ENCODE measurements at regions of chr6 and their contacts with region 1.

Region 1: DNA sequence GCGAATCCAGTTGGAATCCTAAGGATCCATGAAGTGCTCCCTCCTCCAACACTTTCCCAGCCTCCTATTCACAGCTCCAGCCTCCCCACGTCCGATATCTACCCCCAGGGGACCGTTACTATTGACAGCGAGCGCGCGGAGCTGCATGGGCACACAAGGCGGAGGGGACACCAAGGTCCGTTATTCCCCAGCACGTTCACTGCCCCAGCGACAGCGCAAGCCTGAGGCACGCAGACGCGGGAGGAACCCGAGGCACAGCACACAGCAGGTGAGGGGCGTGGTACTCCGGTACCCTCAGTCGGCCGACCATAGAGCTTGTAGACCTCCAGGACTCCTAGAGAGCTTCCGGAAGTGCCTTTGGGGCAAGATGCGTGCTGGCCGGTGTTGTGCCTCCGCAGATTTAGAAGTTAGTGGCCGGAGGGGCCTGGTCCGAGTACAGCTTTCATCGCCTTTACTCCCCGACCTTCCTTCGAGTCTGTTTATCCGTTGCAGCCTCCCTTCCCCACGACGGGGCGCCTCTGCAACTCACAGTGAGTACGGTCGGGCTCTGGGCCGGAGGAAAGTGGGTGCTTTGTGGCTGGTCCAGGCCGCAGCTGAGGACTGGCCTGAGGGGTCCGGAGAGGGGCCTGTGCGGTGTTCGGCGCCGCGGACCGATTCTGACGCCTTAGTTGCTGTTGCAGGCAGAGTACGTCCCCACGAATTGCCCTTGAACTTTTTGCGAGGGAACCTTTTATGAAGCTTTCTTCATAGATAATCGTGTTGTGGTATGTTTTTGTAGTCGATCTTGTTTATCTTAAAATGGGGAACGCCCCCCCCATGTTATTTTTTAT is at the start of gene ZKSCAN8:
- DNase-seq: peak; percentile 81 to 83
- ATAC-seq: peak; percentile 90
- total RNA-seq, gene ZKSCAN8: 10.7 to 13.4 TPM

Region 2: DNA sequence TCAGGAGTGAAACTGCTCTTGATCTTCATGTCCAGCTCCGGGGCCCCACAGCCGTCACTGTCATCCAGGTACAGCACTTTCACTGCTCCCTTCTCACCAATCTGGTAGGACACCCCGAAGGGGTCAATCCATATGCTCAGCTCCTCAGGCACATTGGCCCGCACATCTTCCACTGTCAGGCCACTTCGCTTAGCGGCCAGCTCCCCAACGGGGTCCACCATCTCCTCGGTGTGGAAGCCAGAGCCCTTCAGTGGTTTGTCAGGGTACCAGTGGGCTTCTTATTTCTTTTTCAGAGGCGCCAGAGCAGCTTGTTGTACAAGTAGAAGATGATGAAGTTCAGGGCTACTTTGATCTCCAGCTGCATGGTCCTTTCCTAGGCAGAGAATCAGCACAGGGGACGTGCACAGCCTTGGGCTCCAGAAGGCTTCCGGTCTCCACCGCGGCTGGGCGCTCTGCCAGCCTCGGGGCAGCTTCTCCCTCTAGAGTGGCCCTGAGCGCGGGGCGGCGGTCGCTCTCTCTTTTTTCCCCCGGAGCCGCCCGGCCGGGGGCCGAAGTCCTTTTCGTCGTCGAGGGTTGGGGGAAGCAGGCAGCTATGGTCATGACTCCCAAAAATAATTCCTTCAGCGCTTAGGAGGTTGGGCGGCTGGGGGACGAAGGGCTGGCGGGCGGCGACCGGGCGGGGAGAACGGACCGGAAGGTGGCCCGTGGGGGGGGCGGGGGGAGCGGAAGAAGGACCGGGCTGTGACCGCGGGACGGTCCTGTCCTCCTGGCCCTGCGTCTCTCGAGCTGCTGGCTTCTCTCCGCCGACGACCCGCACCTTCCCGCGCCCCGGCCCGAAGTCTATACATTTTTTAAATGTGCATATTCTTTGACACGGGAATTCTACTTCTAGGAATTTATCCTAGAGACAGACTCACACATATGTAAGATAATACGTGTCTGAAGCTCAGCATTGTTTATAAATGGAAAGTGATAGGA is 76.8 kb after region 1 on chr6:
- intact Hi-C with region 1: loop called in 1 of 2 experiments (anchors 10 kb)
- DNase-seq: peak; percentile 78 to 90
- ATAC-seq: peak; percentile 90

Measured in left colon (tissue), 2 donors.